Dorsolateral prefrontal cortex (tissue), 120 donors: ENCODE measurements at regions of chr5 and their contacts with region 1.

Region 1: DNA sequence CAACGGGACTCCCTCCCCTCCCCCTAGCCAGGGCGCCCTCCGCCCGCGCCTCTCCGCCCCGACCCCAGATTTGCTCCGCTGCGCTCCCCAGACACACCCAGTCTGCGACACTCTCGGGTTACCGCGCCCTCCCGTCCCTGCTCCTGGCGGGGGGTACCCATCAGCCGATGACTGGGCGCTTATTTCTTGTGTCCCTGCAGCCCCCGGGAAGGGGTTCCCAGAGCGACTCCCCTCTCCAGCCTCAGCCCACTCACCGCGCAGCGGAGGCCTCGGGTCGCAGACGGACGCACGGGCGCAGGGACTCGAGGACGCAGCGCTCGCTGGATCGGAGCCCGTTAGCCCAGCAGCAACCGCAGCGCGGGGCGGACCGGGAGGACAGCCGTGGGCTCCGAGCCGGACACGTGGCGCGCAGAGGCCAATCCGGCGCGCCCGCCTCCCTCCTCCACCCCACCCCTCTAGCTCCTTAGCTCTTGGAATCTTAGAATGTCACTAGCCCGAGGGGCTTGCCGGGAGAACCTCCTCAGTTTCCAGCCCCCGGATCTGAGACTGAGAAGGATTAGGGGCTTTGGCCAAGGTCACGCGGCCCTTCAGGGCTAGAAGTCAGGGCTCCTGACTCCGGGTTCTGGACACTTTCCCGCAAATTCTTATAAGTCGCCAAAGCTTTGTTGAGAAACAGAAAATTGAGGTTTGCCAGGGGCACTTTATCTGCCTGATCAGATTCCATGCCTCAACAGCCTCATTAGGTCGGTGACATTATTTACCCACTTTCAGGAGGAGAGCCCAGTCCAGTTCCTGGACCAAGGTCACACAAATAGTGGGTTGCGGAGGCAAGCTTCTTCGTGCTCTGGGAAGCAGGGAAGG is at the start of gene ANXA6:
- DNase-seq: peak; percentile 68 to 91 (median 86)
- H3K4me3 ChIP-seq: peak within 1 kb of the TSS; percentile 53 to 89 (median 76)
- H3K27ac ChIP-seq: peak within 1 kb of the TSS in 57 of 59 donors; percentile 3 to 93 (median 80)
- H3K27me3 ChIP-seq: no peaks in the 10 kb centered on the region
- CTCF ChIP-seq: peak in 11 of 56 donors; percentile 9 to 37 (median 19)
- total RNA-seq, gene ANXA6: 98.9 to 428 (median 291) TPM

Region 2: GRCh38 chr5:150398722-150399523 is 758.7 kb before region 1 on chr5:
- intact Hi-C with region 1: no loop called
- DNase-seq: no peak
- H3K4me3 ChIP-seq: no peak overlapping the region
- H3K27ac ChIP-seq: peak overlapping the region in 23 of 59 donors; percentile 1 to 89 (median 31)
- H3K27me3 ChIP-seq: no peaks in the 10 kb centered on the region
- CTCF ChIP-seq: peak in 12 of 56 donors; percentile 6 to 51 (median 24)

Region 3: DNA sequence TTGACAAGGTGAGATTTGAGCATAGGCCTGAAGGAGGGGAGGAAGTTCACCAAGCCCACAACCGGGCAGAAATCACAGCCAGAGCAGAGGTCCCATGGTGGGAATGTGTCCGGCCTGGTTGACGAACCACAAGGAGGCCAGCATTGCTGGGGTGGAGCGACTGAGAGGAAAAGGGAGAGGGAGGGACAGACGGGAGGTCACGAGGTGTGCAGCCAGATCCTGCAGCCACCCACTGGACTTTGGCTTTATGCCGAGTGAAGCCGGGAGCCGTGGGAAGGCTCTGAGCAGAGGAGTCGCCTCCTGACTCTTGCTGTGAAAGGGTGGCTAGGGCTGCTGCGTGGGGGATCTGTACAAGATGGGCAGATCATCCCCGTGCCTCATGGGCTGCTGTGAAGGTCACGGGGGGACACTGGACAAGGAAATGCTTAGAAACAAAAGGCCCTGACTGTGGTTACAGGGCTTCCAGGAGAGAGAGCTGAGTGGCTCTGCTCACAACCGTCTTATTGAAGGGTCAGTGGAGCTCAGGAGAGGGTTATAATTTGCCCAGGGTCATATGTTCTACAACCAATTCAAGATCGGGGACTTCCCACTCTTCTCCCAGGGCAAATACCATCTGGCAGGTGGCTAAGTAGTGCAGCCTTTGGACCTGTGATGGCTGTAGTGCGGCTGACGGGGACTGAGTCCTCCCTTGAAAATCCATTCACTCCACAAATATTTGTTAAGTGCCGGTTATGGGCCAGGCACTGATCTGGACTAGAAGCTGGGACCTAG is 729.4 kb before region 1 on chr5:
- intact Hi-C with region 1: no loop called
- DNase-seq: peak in 9 of 10 donors; percentile 20 to 82 (median 60)
- H3K4me3 ChIP-seq: no peak overlapping the region
- H3K27ac ChIP-seq: peak overlapping the region in 58 of 59 donors; percentile 31 to 100 (median 92)
- H3K27me3 ChIP-seq: no peaks in the 10 kb centered on the region
- CTCF ChIP-seq: peak in 1 of 56 donors; percentile 15

Region 4: DNA sequence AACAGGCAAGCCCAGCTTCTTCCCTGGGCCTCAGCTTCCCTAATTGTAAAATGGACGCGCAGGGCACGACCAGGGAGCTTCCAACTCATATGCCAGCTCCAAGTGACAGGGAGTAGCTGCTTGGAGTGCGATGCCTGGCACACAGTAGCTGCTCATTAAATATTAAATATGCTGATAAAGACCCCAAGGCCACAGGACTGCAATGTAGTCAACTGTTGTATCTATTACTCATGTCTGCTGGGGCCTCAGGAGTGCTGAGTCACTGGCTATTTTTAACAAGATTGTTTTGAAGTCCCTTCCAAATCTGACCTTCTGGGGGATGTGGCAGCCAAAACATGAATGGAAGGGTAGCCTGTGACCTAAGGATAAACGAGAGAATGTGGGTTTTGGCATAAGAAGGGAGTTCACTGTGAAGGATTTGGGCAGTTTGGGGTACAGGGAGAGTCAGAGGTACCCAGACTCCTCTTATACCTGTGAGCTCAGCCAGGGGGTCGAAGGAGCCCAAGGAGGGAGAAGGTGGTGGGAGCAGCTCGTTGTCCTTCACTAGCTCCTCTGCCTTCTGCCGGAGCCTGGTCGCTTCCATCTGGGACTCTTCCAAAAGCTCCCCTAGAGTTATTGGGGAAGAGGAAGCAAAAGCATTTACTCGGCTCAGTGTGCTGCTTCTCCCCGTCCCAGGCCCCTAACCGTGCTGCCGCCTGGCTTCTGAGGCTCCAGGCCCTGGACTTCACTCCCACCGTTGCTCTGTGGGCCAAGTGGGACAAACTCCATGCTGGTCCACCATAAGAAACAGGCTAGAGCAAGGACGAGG is 94.3 kb before region 1 on chr5:
- intact Hi-C with region 1: loop called in 1 of 2 experiments (anchors 5 kb)
- DNase-seq: peak in 1 of 10 donors; percentile 59
- H3K4me3 ChIP-seq: no peak overlapping the region
- H3K27ac ChIP-seq: peak overlapping the region in 32 of 59 donors; percentile 4 to 78 (median 48)
- H3K27me3 ChIP-seq: no peaks in the 10 kb centered on the region
- CTCF ChIP-seq: no peak

Region 5: DNA sequence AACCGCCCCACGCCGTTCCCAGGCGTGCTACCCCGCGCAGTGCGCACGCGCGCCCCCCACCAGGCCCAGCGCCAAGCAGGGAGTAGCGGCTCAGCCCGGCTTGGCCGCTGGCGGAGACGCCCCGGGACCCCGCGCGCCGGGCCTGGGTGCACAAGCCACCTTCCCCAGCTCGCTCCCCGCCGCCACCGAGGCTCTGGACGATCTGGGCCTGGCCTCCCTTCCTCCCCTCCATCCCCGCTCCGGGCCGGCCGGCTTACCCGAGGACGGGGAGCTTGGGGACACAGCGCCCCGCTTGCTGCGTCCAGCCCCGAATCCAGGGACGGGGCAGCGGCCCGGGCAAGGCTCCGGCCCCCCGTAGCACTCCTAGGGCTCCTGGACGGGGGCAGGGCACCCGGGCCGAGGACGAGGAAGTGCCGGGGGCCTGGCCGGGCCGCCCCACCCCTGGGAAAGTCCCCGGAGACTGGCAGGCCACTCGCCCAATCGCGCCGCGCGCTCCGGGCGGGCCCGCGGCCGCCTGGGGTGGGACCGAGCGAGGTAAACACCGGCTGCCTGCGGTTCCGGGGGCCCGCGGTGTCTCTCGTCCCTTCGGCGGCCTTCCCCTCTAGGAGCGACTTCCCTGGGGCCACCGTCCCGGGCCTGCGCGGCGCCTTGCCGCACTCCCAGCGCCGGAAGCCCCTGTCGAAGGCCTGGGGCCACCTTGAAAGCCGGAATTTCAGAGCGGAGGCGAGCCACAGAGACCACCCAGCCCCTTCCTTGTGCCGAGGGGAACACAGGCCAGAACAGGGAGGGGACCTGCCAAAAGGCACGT is 76.8 kb before region 1 on chr5 and contains the start of gene TNIP1:
- intact Hi-C with region 1: loop called in 1 of 2 experiments (anchors 2 kb)
- DNase-seq: peak; percentile 79 to 97 (median 89)
- H3K4me3 ChIP-seq: peak within 1 kb of the TSS; percentile 64 to 100 (median 95)
- H3K27ac ChIP-seq: peak within 1 kb of the TSS; percentile 91 to 99 (median 98)
- H3K27me3 ChIP-seq: no peaks in the 10 kb centered on the region
- CTCF ChIP-seq: peak in 18 of 56 donors; percentile 1 to 41 (median 17)
- total RNA-seq, gene TNIP1: 39.3 to 76.8 (median 57.4) TPM

Region 6: DNA sequence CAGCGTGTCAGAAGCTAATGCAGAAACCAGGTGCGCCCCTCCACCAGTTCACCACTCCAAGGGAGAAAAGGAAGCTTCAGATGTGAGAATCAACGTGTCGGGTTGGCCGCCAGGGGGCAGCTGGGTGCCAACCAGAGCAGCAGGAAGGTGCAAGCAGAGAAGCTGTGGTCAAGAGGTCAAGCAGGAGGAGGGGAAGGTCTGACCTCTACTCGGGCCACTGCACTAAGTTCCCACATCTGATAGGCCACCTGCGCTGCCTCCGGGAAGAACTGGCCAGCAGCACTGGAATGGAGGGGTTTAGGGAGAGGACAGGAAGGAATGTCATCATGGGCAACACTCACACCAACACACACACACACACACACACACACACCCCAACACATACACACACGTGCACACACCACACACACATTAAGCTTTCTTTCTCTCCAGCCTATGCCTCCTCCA is 31.4 kb before region 1 on chr5:
- intact Hi-C with region 1: loop called (anchors 1 to 2 kb)
- DNase-seq: peak; percentile 64 to 81 (median 72)
- H3K4me3 ChIP-seq: no peak overlapping the region
- H3K27ac ChIP-seq: peak overlapping the region in 1 of 59 donors; percentile 40
- H3K27me3 ChIP-seq: no peaks in the 10 kb centered on the region
- CTCF ChIP-seq: peak; percentile 55 to 89 (median 80)

Region 7: GRCh38 chr5:151252762-151253604 is 95.3 kb after region 1 on chr5 and contains the start of gene GM2A:
- intact Hi-C with region 1: loop called in 1 of 2 experiments (anchors 5 kb)
- DNase-seq: peak; percentile 96 to 100 (median 99)
- H3K4me3 ChIP-seq: peak within 1 kb of the TSS; percentile 61 to 99 (median 90)
- H3K27ac ChIP-seq: peak within 1 kb of the TSS in 55 of 59 donors; percentile 10 to 91 (median 79)
- H3K27me3 ChIP-seq: no peaks in the 10 kb centered on the region
- CTCF ChIP-seq: peak in 11 of 56 donors; percentile 4 to 47 (median 21)
- total RNA-seq, gene GM2A: 25.4 to 82.0 (median 40.5) TPM